Common myeloid progenitor, CD34-positive (primary cell): ENCODE measurements at regions of chr10 and their contacts with region 1.

Region 1: GRCh38 chr10:93376372-93377293 is 105.5 kb downstream of the MYOF start:
- DNase-seq: peak; percentile 79 to 86 (median 81)
- H3K4me3 ChIP-seq: no peak overlapping the region
- H3K27ac ChIP-seq: no peak overlapping the region
- H3K4me1 ChIP-seq: no peaks in the 10 kb centered on the region
- H3K27me3 ChIP-seq: no peaks in the 10 kb centered on the region

Region 2: GRCh38 chr10:93095225-93095624 is 281.4 kb before region 1 on chr10:
- CTCF ChIA-PET with region 1: no interaction called
- POLR2A ChIA-PET with region 1: no interaction called
- DNase-seq: no peak
- H3K4me3 ChIP-seq: no peak overlapping the region
- H3K27ac ChIP-seq: no peak overlapping the region
- H3K4me1 ChIP-seq: no peaks in the 10 kb centered on the region
- H3K27me3 ChIP-seq: peaks cover 0 to 2% (median 0%) of the 10 kb centered on the region in 5 experiments

Region 3: DNA sequence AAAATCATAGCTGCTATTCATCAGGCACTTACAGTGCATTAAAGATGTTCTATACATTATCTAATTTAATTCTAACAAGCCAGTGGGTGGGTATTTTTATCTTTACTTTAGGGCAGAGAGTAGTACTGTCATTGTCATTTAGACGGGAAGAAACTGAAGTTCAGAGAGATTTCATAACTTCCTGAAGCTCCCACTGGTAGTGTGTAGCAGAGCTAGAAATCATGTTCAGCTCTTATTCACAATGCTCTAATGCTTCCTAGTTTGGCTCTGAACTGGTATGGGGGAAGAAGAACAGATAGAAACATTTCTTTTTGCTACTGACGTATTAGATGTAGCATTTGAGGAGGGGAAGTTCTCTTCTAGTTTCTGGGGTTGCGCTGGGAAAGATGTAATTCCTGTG is 186.3 kb before region 1 on chr10:
- CTCF ChIA-PET with region 1: no interaction called
- POLR2A ChIA-PET with region 1: no interaction called
- DNase-seq: peak in 1 of 3 donors; percentile 22
- H3K4me3 ChIP-seq: no peak overlapping the region
- H3K27ac ChIP-seq: no peak overlapping the region
- H3K4me1 ChIP-seq: peaks cover 0 to 4% (median under 1%) of the 10 kb centered on the region in 4 experiments
- H3K27me3 ChIP-seq: peaks cover 0 to 3% (median 0%) of the 10 kb centered on the region in 5 experiments

Region 4: DNA sequence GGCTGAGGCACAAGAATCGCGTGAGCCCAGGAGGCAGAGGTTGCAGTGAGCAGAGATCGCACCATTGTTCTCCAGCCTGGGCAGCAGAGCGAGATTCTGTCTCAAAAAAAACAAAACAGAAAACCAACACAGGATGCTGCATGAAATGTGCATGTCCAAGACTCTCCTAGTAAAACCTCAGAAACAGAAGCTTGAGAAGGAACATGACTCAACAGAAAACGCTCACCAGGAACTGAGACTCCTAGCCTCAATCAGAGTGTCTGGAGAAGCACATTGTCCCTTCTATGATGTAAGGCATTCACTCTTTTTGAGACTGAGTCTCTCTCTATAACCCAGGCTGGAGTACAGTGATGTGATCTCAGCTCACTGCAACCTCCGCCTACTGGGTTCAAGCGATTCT is 62.8 kb before region 1 on chr10:
- CTCF ChIA-PET with region 1: no interaction called
- POLR2A ChIA-PET with region 1: no interaction called
- DNase-seq: peak; percentile 61 to 93 (median 91)
- H3K4me3 ChIP-seq: no peak overlapping the region
- H3K27ac ChIP-seq: no peak overlapping the region
- H3K4me1 ChIP-seq: peaks cover 3 to 35% (median 24%) of the 10 kb centered on the region in 4 experiments
- H3K27me3 ChIP-seq: no peaks in the 10 kb centered on the region

Region 5: DNA sequence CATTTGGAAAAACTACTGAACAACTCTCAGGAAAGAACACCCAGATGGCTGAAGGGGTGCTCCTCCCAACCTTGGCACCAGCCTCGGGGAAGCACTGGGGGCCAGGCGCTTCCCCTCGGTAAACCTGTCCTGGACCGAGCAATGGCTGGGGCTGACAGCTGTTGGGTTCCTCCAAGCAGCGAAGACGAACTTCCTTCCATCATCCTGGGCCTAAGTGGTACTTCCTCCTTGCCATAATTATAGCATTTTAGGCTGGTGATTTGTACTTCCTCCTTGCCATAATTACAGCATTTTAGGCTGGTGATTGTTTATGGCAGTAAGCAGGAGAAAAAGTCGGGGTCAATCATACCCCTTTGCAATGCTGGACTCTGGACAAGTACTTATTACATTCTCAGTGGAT is 36.2 kb after region 1 on chr10:
- CTCF ChIA-PET with region 1: interaction called, 10 read pairs
- POLR2A ChIA-PET with region 1: no interaction called
- DNase-seq: peak; percentile 18 to 82 (median 70)
- H3K4me3 ChIP-seq: peak overlapping the region in 1 of 7 experiments; percentile 16
- H3K27ac ChIP-seq: no peak overlapping the region
- H3K4me1 ChIP-seq: peaks cover 9 to 38% (median 16%) of the 10 kb centered on the region in 4 experiments
- H3K27me3 ChIP-seq: no peaks in the 10 kb centered on the region

Region 6: GRCh38 chr10:93461807-93462178 is 85.2 kb after region 1 on chr10:
- CTCF ChIA-PET with region 1: interaction called, 12 read pairs
- POLR2A ChIA-PET with region 1: no interaction called
- DNase-seq: peak in 2 of 3 donors; percentile 43 to 62
- H3K4me3 ChIP-seq: no peak overlapping the region
- H3K27ac ChIP-seq: no peak overlapping the region
- H3K4me1 ChIP-seq: peaks cover 0 to 31% (median 6%) of the 10 kb centered on the region in 4 experiments
- H3K27me3 ChIP-seq: no peaks in the 10 kb centered on the region

Region 7: GRCh38 chr10:93496322-93497041 is 119.8 kb after region 1 on chr10 and contains the start of gene CEP55:
- CTCF ChIA-PET with region 1: interaction called, 375 read pairs
- POLR2A ChIA-PET with region 1: no interaction called
- DNase-seq: peak; percentile 91 to 96 (median 95)
- H3K4me3 ChIP-seq: peak within 1 kb of the TSS; percentile 63 to 96 (median 90)
- H3K27ac ChIP-seq: no peak within 1 kb of the TSS
- H3K4me1 ChIP-seq: peaks cover 4 to 25% (median 16%) of the 10 kb centered on the region in 4 experiments
- H3K27me3 ChIP-seq: peaks cover 0 to 7% (median 3%) of the 10 kb centered on the region in 5 experiments

Region 8: GRCh38 chr10:93509816-93510215 is 133.2 kb after region 1 on chr10:
- CTCF ChIA-PET with region 1: interaction called, 51 read pairs
- POLR2A ChIA-PET with region 1: no interaction called
- DNase-seq: no peak
- H3K4me3 ChIP-seq: no peak overlapping the region
- H3K27ac ChIP-seq: no peak overlapping the region
- H3K4me1 ChIP-seq: no peaks in the 10 kb centered on the region
- H3K27me3 ChIP-seq: no peaks in the 10 kb centered on the region